GM18951 (cell line): ENCODE measurements at regions of chr1 and their contacts with region 1.

Region 1: GRCh38 chr1:241531195-241532161 is 700 bp upstream of the KMO start:
- POLR2A ChIP-seq: peak; percentile 6

Region 2: GRCh38 chr1:241362349-241362748 is 169.1 kb before region 1 on chr1:
- in situ Hi-C with region 1: no loop called
- POLR2A ChIP-seq: no peak

Region 3: DNA sequence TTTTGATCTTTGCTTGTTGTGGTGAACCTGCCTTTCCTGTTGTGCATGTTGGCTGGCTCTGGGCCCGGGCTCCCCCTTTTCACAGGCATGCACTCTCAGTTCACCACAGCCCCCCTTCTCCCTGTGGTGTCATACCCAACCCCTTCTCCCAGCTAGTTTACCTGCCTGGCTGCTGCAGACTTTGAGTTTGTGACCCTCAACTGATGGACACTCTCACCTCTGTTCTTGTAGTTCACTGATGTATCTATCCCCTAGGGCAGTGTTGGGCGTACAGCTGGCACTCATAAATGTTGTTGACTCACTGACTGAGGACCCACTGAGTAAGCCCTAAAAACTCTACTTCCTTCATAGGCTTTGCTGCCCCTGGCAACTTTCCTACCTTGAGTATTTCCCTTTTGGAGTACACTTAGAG is 175.5 kb after region 1 on chr1:
- in situ Hi-C with region 1: no loop called
- POLR2A ChIP-seq: no peak

Region 4: GRCh38 chr1:241847796-241848685 is 316.6 kb after region 1 on chr1 and contains the start of gene EXO1:
- in situ Hi-C with region 1: loop called (anchors 25 kb)
- POLR2A ChIP-seq: peak; percentile 70